ENCODE measurements at regions of chr11 and their contacts with region 1.

Region 1: GRCh38 chr11:2400069-2400760 is at the start of gene TSSC4:
- DNase-seq: peak; percentile 99
- H3K4me3 ChIP-seq: peak within 1 kb of the TSS; percentile 99
- CTCF ChIP-seq: peak; percentile 99

Region 2: GRCh38 chr11:2366261-2366660 is 34.0 kb before region 1 on chr11:
- CTCF ChIA-PET with region 1: no interaction called
- POLR2A ChIA-PET with region 1: no interaction called
- DNase-seq: no peak
- H3K4me3 ChIP-seq: no peak overlapping the region
- CTCF ChIP-seq: no peak

Region 3: GRCh38 chr11:2377511-2378443 is 22.4 kb before region 1 on chr11:
- CTCF ChIA-PET with region 1: interaction called, 7 read pairs
- POLR2A ChIA-PET with region 1: interaction called, 32 read pairs
- DNase-seq: no peak
- H3K4me3 ChIP-seq: peak overlapping the region; percentile 79
- CTCF ChIP-seq: no peak

Region 4: DNA sequence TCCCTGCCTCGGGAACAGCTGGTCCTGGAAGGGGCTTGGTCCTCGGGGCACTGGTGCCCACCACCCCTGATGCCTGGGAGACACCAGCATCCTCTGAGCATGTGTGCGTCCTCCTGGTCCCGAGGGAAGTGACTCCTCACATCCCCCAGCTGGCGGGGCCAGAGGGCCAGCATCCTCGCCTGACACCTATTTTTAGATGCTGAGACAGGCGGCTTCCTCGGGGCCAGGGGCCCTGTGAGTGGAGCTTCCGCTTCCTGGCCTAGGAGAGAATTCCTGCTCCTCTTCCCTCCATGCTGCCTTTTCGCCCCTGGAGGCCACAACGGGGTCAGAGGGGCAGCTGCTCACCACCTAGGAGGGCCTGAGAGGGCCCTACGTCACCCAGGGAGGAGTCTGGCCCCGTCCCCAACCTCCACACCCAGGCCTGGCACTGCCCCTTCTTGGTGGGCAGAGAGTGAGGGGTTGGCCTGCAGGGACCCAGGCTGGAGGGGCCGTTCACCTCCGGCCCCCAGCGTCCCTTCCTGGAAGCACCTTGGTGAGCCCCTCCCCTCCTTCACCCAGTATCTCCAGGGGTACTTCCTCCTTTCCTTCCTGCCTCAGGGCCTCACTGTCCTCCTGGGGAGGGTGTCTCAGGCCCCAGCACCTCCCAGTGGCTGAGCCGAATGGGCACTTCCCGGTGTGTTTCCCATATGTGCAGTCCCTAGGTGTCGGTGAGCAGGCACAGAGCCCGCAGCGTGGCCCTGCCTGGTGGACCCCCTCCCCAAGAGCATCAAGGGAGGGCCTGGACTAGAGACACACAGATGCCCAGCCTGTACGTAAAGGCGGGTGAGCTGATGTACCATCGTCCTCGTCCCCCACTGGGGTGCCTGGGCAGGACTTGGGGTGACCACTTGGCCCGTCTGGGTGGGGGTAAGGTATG is 17.0 kb before region 1 on chr11:
- CTCF ChIA-PET with region 1: interaction called, 12 read pairs
- POLR2A ChIA-PET with region 1: interaction called, 32 read pairs
- DNase-seq: no peak
- H3K4me3 ChIP-seq: no peak overlapping the region; the same call in 1 of the 2 replicates
- CTCF ChIP-seq: no peak

Region 5: DNA sequence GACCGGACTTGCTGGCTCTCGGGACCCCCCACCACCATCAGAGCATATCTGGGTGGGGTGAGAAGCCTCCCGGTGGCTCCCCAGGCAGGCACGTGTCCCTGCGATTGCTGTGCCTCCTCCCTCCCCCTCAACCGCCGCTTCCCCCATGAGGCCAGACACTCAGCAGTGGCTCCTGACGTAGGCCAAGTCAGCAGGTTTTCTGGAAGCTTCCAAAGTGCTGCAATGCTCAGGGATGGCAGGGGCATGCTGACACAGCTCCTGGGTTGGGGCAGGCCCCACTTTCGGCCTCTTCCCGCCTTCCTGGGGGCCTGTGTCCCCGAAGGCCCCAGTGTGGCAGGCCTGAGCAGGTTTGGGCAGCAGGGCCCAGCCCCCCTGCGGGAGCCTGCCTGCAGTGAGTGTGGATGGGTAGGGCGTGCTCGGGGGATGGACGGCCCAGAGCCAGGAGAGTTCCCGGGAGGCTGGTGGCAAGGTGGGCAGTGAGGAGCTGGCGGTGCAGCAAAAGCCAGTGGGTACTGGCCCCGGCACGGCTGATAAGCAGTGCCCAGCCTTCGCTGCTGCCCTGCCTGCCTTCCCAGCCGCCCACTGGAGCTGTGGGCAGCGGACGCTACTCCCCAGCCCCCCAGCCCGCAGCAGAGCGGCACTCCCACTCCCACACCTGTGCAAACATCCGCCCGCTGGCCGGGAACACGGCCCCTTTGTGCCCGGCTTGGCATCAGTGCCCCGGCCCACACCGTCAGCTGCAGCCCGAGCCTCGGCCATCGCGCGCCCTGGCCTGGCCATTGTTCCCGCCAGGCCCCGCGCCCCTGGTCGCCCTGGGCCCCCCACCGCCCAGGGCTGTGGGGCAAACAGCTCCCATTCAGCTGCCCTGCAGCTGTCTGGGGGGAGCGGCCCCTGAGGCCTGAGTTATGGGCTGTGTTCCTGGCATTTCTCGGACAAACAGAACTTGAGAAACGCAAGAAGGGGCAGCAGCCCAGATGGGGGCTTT is 174.6 kb after region 1 on chr11:
- CTCF ChIA-PET with region 1: no interaction called
- POLR2A ChIA-PET with region 1: no interaction called
- DNase-seq: no peak
- H3K4me3 ChIP-seq: no peak overlapping the region
- CTCF ChIP-seq: no peak